Psoas muscle (tissue), 8 donors: ENCODE measurements at regions of chr2 and their contacts with region 1.

Region 1: DNA sequence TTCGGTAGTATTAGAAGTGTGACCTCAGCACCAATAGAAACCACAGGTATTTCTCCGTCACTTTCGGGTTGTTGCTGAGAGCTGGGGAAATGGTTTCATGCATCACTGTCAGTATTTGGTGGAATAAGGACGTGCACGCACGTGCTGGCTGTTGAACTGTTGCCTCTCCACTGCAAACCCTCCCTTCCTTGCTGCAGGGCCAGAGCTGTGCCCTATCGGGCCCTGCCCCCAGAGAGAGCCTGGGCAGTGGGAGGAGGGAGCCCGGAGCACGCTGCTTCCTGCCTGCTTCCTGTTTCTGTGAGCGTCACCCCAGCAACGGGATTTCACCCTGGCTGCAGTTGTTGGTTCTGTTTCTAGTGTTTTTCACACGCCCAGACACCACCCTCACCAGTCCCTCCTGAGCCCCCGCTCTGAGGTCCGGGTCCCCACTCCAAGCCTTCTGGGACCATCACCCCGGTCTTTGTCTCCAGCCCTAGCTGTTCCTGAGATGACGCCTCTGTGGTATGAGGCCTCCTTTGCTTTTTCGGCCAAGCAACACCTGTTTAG is 47.4 kb downstream of the LRRFIP1 start:
- DNase-seq: peak; percentile 81 to 87
- ATAC-seq: peak; percentile 69 to 77 (median 75)
- H3K4me3 ChIP-seq: peak overlapping the region; percentile 54
- H3K27ac ChIP-seq: peak overlapping the region; percentile 93
- H3K4me1 ChIP-seq: peaks cover 80% of the 10 kb centered on the region
- H3K27me3 ChIP-seq: no peaks in the 10 kb centered on the region
- CTCF ChIP-seq: peak; percentile 7

Region 2: GRCh38 chr2:237596520-237596860 is 78.3 kb before region 1 on chr2:
- intact Hi-C with region 1: loop called in 1 of 2 experiments (anchors 5 kb)
- DNase-seq: no peak
- ATAC-seq: no peak
- H3K4me3 ChIP-seq: no peak overlapping the region
- H3K27ac ChIP-seq: no peak overlapping the region
- H3K4me1 ChIP-seq: peaks cover 29% of the 10 kb centered on the region
- H3K27me3 ChIP-seq: no peaks in the 10 kb centered on the region
- CTCF ChIP-seq: no peak

Region 3: GRCh38 chr2:238042849-238043584 is 368.2 kb after region 1 on chr2:
- intact Hi-C with region 1: no loop called
- DNase-seq: no peak
- ATAC-seq: peak in 1 of 4 donors; percentile 7
- H3K4me3 ChIP-seq: no peak overlapping the region
- H3K27ac ChIP-seq: no peak overlapping the region
- H3K4me1 ChIP-seq: no peaks in the 10 kb centered on the region
- H3K27me3 ChIP-seq: no peaks in the 10 kb centered on the region
- CTCF ChIP-seq: no peak